ENCODE measurements at regions of chr5 and their contacts with region 1.

Region 1: DNA sequence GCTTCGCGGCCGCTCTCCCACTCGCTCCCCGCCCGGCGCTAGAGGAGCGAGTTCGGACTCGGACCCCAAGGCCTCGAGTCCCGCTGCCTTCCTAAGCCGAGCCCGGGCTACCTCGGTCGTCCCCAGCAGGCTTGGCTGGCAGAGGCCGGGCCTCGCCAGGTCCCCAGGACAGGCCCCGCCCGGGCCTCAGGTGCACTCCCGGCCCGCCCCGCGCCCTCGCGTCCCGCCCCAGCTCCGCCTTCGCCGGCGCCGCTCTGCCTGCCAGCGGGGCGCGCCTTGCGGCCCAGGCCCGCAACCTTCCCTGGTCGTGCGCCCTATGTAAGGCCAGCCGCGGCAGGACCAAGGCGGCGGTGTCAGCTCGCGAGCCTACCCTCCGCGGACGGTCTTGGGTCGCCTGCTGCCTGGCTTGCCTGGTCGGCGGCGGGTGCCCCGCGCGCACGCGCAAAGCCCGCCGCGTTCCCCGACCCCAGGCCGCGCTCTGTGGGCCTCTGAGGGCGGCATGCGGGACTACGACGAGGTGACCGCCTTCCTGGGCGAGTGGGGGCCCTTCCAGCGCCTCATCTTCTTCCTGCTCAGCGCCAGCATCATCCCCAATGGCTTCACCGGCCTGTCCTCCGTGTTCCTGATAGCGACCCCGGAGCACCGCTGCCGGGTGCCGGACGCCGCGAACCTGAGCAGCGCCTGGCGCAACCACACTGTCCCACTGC is at the start of gene SLC22A5:
- DNase-seq: peak; percentile 90
- H3K4me3 Mint-ChIP-seq: peak within 1 kb of the TSS; percentile 78
- H3K27ac Mint-ChIP-seq: peak within 1 kb of the TSS; percentile 84
- H3K4me1 Mint-ChIP-seq: peaks cover 37% of the 10 kb centered on the region
- H3K27me3 Mint-ChIP-seq: no peaks in the 10 kb centered on the region
- CTCF ChIP-seq: no peak
- total RNA-seq, gene SLC22A5: 24.6 and 25.4 TPM in 2 replicates

Region 2: DNA sequence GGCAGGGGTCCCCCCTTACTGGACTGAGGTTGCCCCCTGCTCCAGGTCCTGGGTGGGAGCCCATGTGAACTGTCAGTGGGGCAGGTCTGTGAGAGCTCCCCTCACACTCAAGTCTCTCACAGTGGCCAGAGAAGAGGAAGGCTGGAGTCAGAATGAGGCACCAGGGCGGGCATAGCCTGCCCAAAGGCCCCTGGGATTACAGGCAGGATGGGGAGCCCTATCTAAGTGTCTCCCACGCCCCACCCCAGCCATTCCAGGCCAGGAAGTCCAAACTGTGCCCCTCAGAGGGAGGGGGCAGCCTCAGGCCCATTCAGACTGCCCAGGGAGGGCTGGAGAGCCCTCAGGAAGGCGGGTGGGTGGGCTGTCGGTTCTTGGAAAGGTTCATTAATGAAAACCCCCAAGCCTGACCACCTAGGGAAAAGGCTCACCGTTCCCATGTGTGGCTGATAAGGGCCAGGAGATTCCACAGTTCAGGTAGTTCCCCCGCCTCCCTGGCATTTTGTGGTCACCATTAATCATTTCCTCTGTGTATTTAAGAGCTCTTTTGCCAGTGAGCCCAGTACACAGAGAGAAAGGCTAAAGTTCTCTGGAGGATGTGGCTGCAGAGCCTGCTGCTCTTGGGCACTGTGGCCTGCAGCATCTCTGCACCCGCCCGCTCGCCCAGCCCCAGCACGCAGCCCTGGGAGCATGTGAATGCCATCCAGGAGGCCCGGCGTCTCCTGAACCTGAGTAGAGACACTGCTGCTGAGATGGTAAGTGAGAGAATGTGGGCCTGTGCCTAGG is 296.2 kb before region 1 on chr5 and contains the start of gene CSF2:
- CTCF ChIA-PET with region 1: no interaction called
- intact Hi-C with region 1: loop called (anchors 10 kb)
- DNase-seq: peak; percentile 58
- H3K4me3 Mint-ChIP-seq: no peak within 1 kb of the TSS
- H3K27ac Mint-ChIP-seq: no peak within 1 kb of the TSS
- H3K4me1 Mint-ChIP-seq: peaks cover 39% of the 10 kb centered on the region
- H3K27me3 Mint-ChIP-seq: no peaks in the 10 kb centered on the region
- CTCF ChIP-seq: no peak
- total RNA-seq, gene CSF2: 0.80 TPM in 1 of 2 replicates, not detected in the other

Region 3: GRCh38 chr5:132180134-132180745 is 189.4 kb before region 1 on chr5:
- CTCF ChIA-PET with region 1: interaction called, 5 read pairs
- intact Hi-C with region 1: loop called (anchors 1 kb)
- DNase-seq: peak; percentile 58
- H3K4me3 Mint-ChIP-seq: no peak overlapping the region
- H3K27ac Mint-ChIP-seq: no peak overlapping the region
- H3K4me1 Mint-ChIP-seq: peaks cover 11% of the 10 kb centered on the region
- H3K27me3 Mint-ChIP-seq: no peaks in the 10 kb centered on the region
- CTCF ChIP-seq: peak; percentile 62

Region 4: DNA sequence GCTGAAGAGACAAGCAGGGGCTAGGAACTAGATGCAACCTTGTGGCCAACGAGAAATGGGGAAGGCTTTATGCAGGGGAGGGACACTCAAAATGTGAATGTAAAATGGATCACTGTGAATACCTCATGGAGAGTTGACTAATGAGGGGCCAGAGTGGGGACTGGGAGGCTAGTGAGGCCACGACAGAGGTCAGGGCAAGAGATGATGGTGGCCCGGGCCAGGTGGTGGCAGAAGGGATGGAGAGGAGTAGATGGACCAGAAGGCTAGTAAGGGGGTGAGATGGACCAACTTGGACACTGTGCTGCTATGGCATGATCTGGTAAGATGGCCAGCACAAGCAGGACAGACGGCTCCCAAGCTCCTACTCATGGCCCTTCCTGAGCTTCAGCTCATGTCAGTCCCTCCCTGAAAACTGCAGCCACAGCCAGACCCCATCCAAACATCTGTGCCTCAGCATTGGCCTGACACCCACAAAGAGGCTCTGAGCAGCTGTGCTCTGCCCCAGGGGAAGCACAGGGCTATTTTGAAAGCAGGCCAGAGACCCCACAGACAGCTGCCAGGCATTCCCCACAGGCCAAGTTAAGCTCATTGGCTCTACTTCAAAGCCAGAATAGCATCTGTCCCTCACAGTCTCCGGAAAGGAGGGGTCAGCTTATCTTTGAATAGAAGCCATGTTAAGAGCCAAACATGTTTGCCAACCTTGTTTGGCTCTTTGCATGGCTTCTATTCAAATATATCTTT is 164.1 kb before region 1 on chr5:
- CTCF ChIA-PET with region 1: no interaction called
- intact Hi-C with region 1: no loop called
- DNase-seq: no peak
- H3K4me3 Mint-ChIP-seq: no peak overlapping the region
- H3K27ac Mint-ChIP-seq: no peak overlapping the region
- H3K4me1 Mint-ChIP-seq: no peaks in the 10 kb centered on the region
- H3K27me3 Mint-ChIP-seq: no peaks in the 10 kb centered on the region
- CTCF ChIP-seq: no peak

Region 5: DNA sequence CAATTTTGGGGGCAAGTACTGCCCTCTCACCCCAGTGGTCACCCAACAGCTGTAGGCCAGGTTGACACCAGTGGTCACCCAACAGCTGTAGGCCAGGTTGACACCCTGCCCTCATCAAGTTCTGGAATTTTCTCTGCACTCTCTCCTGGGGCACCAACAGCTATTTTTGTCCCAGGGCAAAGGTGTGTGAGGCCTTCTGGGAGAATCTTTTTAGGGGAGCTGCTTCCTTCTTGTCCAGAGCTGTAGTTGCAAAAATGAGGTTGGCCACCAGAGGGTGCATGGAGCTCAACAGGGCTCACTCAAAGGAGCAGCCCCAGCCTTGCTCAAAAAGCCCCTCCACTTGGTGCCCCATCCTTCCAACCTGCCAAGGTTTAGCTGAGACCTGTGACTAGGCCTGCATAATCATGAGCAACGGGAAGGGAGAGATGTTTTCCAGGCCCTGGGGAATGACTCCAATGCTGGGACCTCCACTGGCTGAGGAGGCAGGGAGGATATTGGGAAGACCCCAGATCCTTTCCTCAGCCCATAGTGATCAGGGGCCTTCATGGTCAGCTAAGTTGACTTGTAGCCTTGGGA is 131.4 kb before region 1 on chr5:
- CTCF ChIA-PET with region 1: interaction called, 4 read pairs
- intact Hi-C with region 1: loop called (anchors 5 kb)
- DNase-seq: peak; percentile 92
- H3K4me3 Mint-ChIP-seq: no peak overlapping the region
- H3K27ac Mint-ChIP-seq: no peak overlapping the region
- H3K4me1 Mint-ChIP-seq: no peaks in the 10 kb centered on the region
- H3K27me3 Mint-ChIP-seq: no peaks in the 10 kb centered on the region
- CTCF ChIP-seq: peak; percentile 93

Region 6: GRCh38 chr5:132283423-132284043 is 86.1 kb before region 1 on chr5:
- CTCF ChIA-PET with region 1: no interaction called
- intact Hi-C with region 1: loop called (anchors 5 kb)
- DNase-seq: peak; percentile 64
- H3K4me3 Mint-ChIP-seq: no peak overlapping the region
- H3K27ac Mint-ChIP-seq: no peak overlapping the region
- H3K4me1 Mint-ChIP-seq: no peaks in the 10 kb centered on the region
- H3K27me3 Mint-ChIP-seq: peaks cover 15% of the 10 kb centered on the region
- CTCF ChIP-seq: peak; percentile 69

Region 7: DNA sequence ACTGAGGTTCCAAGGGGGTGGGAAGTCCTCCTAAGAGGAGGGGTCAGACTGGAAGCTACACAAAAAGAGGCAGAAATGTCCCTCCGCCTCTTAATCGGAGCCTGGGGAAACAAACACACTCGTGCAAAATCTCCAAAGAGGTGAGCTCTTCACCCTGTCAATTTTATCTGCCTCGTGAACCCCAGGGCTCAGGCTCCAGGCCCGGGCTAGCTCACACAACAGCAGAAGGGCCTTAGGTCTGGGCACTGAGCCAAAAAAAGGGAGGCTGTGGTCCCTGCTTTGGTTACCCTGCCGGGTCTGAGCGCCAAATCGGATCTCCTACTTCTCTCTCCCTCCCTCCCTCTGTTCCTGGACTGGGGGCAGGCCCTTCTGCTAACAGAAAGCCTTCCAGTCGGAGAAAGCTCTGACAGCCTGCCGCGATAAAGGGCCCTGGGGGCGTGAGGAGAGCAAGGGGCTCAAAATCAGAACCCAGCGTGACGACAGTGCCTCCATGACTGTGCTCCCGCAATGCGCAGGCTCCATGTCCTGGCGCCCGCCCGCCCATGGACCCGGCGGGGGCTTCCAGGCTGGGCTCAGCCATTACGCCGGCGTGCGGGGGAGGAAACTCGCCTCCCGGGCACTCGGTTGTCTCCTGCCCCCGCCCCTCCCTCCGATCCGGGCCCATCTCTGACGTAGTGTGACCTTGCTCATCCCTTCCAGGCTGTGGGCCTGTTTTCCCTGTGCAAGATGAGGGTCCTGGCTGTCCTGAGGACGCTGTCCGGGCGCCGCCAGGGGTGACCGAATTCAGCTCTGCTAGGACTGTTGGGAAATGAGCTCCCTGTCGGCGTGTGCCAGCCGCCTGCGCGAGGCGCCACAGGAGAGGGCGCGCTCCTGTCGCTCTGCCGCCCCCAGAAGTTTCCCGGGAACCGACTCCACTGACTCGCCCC is 76.3 kb before region 1 on chr5:
- CTCF ChIA-PET with region 1: interaction called, 27 read pairs
- intact Hi-C with region 1: no loop called
- DNase-seq: peak; percentile 73
- H3K4me3 Mint-ChIP-seq: peak overlapping the region; percentile 88
- H3K27ac Mint-ChIP-seq: peak overlapping the region; percentile 90
- H3K4me1 Mint-ChIP-seq: peaks cover 26% of the 10 kb centered on the region
- H3K27me3 Mint-ChIP-seq: no peaks in the 10 kb centered on the region
- CTCF ChIP-seq: peak; percentile 29

Region 8: GRCh38 chr5:132334812-132335211 is 34.8 kb before region 1 on chr5:
- CTCF ChIA-PET with region 1: no interaction called
- intact Hi-C with region 1: no loop called
- DNase-seq: no peak
- H3K4me3 Mint-ChIP-seq: no peak overlapping the region
- H3K27ac Mint-ChIP-seq: peak overlapping the region; percentile 21
- H3K4me1 Mint-ChIP-seq: peaks cover 22% of the 10 kb centered on the region
- H3K27me3 Mint-ChIP-seq: no peaks in the 10 kb centered on the region
- CTCF ChIP-seq: no peak